Heart left ventricle (tissue), 16 donors: ENCODE measurements at regions of chr1 and their contacts with region 1.

Region 1: DNA sequence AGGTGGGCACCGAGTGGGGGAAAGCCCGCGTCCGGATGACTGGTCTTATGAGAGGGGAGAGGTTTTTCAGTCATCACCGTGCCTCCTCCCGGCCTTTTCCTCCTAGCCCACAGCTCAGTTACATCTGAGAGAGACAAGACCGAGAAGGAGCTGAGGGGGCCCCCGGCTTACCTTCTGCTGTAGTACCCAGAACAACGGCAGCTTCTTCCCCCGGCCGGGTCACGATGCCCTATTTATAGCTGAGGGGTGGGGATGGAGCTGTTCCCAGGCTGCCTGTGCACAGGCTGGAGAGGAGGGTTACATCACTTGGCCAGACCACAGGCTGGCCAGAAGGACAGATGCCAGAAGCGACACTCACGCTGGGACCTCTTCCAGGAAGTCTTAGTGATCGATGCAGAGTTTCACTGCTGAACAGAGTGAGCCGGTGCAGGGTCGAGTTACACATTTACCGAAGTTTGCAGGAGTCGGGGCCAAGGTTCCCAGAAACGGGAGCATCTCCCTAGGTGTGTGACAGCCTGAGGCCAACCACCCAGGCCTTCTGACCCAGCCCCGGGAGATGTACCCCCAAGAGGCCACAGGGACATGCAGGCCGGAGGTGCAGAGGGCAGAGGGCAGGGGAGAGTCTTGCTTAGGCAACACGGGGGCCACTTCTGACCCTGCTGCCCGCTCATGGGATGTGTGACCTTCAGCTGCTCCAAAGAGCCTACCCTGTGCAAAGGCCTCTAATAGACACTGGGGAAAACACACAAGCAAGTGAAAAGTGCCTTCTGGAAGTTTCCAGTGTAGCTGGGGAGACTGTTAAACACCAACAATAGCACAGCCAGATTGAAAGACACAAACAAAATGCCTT is at the start of gene AGT:
- DNase-seq: peak; percentile 84 to 92 (median 87)
- ATAC-seq: peak; percentile 95 to 98 (median 97)
- H3K4me3 ChIP-seq: peak within 1 kb of the TSS; percentile 18 to 76 (median 52)
- H3K27ac ChIP-seq: peak within 1 kb of the TSS; percentile 54 to 93 (median 82)
- H3K4me1 ChIP-seq: peaks cover 0 to 49% (median 17%) of the 10 kb centered on the region in 12 donors
- H3K27me3 ChIP-seq: no peaks in the 10 kb centered on the region
- CTCF ChIP-seq: no peak
- POLR2A ChIP-seq: no peak
- total RNA-seq, gene AGT: 37.1 to 182 (median 69.8) TPM

Region 2: DNA sequence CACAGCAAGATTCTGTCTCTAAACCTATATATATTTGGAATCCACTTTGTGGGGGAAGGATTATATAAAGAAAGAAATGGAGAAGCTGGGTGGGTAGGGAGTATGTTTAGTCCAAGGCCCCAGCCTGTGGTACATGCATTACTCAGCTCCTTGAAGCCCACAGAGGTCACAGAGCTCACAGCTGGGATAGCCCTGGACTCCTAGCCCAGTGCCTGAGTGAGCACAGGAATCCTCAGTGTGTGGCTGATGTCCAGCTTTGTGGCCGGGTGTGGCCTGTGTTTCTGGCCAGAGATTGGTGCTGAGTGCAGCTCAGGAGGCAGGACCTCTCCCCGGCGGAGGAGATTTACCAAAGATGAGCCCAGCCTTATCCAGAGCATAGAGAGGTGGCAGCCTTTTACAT is 40.7 kb after region 1 on chr1:
- intact Hi-C with region 1: loop called in 1 of 10 experiments (anchors 5 kb)
- DNase-seq: peak; percentile 54 to 81 (median 61)
- ATAC-seq: peak; percentile 80 to 86 (median 83)
- H3K4me3 ChIP-seq: no peak overlapping the region
- H3K27ac ChIP-seq: peak overlapping the region in 4 of 12 donors; percentile 35 to 70 (median 56)
- H3K4me1 ChIP-seq: peaks cover 0 to 32% (median 2%) of the 10 kb centered on the region in 12 donors
- H3K27me3 ChIP-seq: no peaks in the 10 kb centered on the region
- CTCF ChIP-seq: no peak
- POLR2A ChIP-seq: no peak